Left lung (tissue), 14 donors: ENCODE measurements at regions of chr16 and their contacts with region 1.

Region 1: GRCh38 chr16:84617791-84618580 is at the start of gene COTL1:
- DNase-seq: peak; percentile 95 to 98 (median 97)
- ATAC-seq: peak; percentile 87
- H3K4me3 ChIP-seq: peak within 1 kb of the TSS; percentile 78 to 90
- H3K27ac ChIP-seq: peak within 1 kb of the TSS; percentile 53 to 90
- H3K4me1 ChIP-seq: peaks cover 5 to 64% of the 10 kb centered on the region in 2 donors
- H3K27me3 ChIP-seq: peaks cover 0 to 9% of the 10 kb centered on the region in 2 donors
- CTCF ChIP-seq: no peak
- polyA plus RNA-seq, gene COTL1: 109 to 146 (median 119) TPM

Region 2: GRCh38 chr16:84349862-84350624 is 267.9 kb before region 1 on chr16:
- intact Hi-C with region 1: no loop called
- DNase-seq: no peak
- ATAC-seq: no peak
- H3K4me3 ChIP-seq: no peak overlapping the region
- H3K27ac ChIP-seq: no peak overlapping the region
- H3K4me1 ChIP-seq: no peaks in the 10 kb centered on the region
- H3K27me3 ChIP-seq: no peaks in the 10 kb centered on the region
- CTCF ChIP-seq: no peak

Region 3: DNA sequence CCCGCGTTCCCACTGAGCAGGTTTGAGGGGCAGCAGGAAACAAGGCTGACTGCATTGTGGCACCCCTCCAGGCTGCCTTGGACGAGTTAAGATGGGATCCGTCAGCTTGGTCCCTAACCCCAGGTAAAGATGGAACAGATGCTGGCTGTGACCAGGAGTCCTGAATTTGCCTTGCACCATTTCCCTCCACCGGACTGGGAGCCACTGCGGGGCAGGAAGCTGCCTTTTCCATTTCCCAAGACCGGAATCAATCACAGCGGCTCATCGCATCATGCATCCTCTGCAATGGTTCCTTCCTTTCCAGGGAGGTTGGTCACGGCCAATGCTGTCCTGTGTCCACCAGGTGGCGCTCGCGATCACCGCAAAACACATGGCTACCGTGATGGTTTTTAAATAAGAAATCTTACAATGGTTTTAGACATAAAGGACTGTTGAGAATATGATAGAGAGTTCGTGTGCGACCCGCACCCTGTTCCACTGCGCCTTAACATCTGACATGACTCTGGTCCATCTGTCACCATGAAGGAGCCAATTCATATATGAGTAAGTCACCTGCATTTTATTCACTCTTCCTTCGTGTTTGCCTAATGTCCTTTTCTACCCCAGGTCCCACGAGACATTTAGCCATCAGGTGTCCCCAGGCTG is 106.7 kb before region 1 on chr16:
- intact Hi-C with region 1: loop called in 1 of 2 experiments (anchors 2 kb)
- DNase-seq: peak; percentile 80 to 95 (median 87)
- ATAC-seq: peak; percentile 84
- H3K4me3 ChIP-seq: no peak overlapping the region
- H3K27ac ChIP-seq: no peak overlapping the region
- H3K4me1 ChIP-seq: peaks cover 3 to 34% of the 10 kb centered on the region in 2 donors
- H3K27me3 ChIP-seq: no peaks in the 10 kb centered on the region
- CTCF ChIP-seq: peak; percentile 94 to 98